ENCODE measurements at regions of chr11 and their contacts with region 1.

Region 1: GRCh38 chr11:109853156-109853776 is 239.9 kb upstream of the ZC3H12C start:
- DNase-seq: peak; percentile 25
- H3K4me3 ChIP-seq: no peak overlapping the region
- H3K27me3 ChIP-seq: no peaks in the 10 kb centered on the region
- CTCF ChIP-seq: peak; percentile 49

Region 2: DNA sequence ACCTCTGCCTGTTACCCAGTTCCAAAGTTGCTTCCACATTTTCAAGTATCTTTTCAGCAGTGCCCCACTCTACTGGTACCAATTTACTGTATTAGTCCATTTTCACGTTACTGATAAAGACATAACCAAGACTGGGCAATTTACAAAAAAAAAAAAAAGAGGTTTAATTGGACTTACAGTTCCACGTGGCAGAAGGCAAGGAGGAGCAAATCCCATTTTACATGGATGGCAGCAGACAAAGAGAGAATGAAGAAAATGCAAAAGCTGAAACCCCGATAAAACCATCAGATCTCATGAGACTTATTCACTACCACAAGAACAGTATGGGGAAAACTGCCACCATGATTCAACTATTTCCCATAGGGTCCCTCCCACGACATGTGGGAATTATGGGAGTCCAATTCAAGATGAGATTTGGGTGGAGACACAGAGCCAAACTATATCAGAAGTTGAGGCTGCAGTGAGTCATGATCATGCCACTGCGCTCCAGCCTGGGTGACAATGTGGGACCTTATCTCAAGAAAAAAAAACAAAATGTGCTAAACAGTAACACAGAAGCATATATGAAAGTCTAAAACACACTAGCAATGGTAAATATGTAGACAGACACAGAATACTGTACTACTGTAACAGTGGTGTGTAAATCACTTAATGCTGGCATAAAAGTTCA is 49.6 kb after region 1 on chr11:
- CTCF ChIA-PET with region 1: no interaction called
- POLR2A ChIA-PET with region 1: no interaction called
- DNase-seq: no peak
- H3K4me3 ChIP-seq: no peak overlapping the region
- H3K27me3 ChIP-seq: no peaks in the 10 kb centered on the region
- CTCF ChIP-seq: no peak

Region 3: GRCh38 chr11:109939166-109939810 is 86.0 kb after region 1 on chr11:
- CTCF ChIA-PET with region 1: interaction called, 18 read pairs
- POLR2A ChIA-PET with region 1: no interaction called
- DNase-seq: peak; percentile 4
- H3K4me3 ChIP-seq: no peak overlapping the region
- H3K27me3 ChIP-seq: no peaks in the 10 kb centered on the region
- CTCF ChIP-seq: peak; percentile 56

Measured in BJ (cell line).